ENCODE measurements at regions of chr12 and their contacts with region 1.

Region 1: DNA sequence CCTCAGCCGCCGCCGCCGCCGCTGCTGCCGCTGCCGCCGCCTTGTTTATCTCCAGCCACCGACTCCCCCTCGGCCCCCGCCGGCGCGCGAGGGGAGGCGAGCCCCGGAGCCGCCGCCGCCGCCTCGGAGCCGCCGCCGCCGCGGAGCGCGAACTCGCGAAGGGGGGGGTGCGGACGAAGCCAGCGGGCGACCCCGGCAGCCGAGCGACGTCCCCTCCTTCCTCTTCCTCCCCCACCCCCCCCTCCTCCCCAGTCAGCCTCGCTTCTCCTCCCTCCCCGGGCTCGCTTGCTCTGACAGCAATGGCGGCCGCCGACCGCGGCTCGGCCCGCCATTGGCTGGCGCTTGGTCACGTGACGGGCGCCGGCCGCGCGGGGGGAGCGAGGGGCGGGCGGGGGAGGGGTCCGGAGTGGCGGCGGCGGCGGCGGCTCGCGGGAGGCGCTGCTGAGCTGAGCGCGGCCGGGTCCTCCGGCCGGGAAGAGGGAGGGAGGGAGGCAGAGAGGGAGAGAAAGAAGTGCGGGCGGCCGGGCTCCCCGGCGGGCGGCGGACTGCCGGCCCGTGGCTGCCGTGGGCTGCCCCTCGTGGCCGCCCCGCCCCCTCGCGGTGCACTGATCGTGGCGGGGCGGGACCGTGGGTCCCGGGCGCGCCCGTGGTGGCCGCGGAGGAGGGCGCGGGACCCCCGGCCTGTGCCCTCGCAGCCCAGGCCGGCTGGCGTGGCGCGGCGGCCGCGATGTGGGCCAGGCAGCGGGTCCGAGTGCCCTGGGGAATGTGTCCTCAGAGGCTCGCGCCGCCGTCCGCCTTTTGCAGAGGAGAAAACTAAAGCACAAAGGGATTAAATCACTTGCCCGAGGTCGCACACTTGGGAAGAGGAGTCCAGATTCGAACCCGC is at the start of gene MED13L:
- DNase-seq: peak; percentile 94
- ATAC-seq: peak; percentile 78
- H3K4me3 ChIP-seq: peak within 1 kb of the TSS; percentile 75 to 91 (median 84)
- H3K4me3 Mint-ChIP-seq: peak within 1 kb of the TSS; percentile 98
- H3K27ac ChIP-seq: peak within 1 kb of the TSS; percentile 22 to 71
- H3K27ac Mint-ChIP-seq: peak within 1 kb of the TSS; percentile 93
- H3K4me1 ChIP-seq: peaks cover 25 to 40% of the 10 kb centered on the region in 2 donors
- H3K4me1 Mint-ChIP-seq: peaks cover 39% of the 10 kb centered on the region
- H3K27me3 ChIP-seq: no peaks in the 10 kb centered on the region
- H3K27me3 Mint-ChIP-seq: no peaks in the 10 kb centered on the region
- CTCF ChIP-seq: peak; percentile 26
- total RNA-seq, gene MED13L: 207 TPM in 2 replicates

Region 2: DNA sequence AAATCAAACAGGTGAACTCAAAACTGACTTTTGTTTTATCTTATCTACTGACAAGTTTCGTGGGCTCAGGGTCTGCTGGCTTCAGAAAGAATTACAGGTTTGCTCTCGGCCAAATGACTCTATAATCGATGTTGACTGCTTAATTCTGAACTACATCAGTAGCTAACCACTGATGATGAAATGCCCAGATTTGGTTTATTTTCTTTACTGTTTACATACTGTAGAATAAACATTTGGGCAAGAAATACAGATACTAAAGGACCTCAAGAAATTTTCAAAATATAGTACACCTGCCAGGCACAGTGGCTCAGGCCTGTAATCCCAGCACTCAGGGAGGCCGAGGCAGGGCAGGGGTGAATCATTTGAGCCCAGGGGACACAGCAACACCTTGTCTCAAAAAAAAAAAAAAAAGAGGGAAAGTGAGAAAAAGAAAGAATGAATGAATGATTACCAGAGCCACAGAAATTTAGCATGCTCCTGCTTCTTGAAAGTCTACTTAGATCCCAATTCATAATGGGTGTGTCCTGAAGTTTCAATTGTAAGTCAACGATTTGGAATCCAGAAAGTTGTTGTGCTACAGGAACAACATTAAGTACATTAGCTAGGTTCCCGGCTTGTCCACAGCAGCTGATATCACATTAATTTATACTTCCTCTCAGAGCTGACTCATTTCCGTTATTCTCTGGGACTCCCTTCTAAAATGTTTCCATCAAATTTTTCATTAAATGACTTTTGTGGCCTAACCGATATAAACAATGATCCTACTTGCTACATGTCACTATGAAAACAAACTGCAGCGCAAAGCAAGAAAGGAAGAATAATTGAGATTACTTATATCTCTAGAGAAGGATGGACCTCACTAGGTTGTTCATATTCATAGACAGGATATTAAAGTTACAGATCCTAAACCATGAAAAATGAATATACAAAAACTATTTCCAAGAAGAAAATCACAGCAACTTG is 134.4 kb before region 1 on chr12:
- CTCF ChIA-PET with region 1: interaction called, 3 read pairs
- POLR2A ChIA-PET with region 1: no interaction called
- intact Hi-C with region 1: loop called (anchors 5 kb)
- DNase-seq: no peak
- ATAC-seq: peak; percentile 36
- H3K4me3 ChIP-seq: no peak overlapping the region
- H3K4me3 Mint-ChIP-seq: peak overlapping the region; percentile 38
- H3K27ac ChIP-seq: peak overlapping the region in 1 of 2 donors; percentile 41
- H3K27ac Mint-ChIP-seq: peak overlapping the region; percentile 17
- H3K4me1 ChIP-seq: peaks cover 18 to 32% of the 10 kb centered on the region in 2 donors
- H3K4me1 Mint-ChIP-seq: peaks cover 58% of the 10 kb centered on the region
- H3K27me3 ChIP-seq: no peaks in the 10 kb centered on the region
- H3K27me3 Mint-ChIP-seq: no peaks in the 10 kb centered on the region
- CTCF ChIP-seq: no peak

Region 3: GRCh38 chr12:116263844-116264243 is 13.8 kb before region 1 on chr12:
- CTCF ChIA-PET with region 1: interaction called, 6 read pairs
- POLR2A ChIA-PET with region 1: interaction called, 13 read pairs
- intact Hi-C with region 1: loop called (anchors 1 kb)
- DNase-seq: peak; percentile 23
- ATAC-seq: peak; percentile 45
- H3K4me3 ChIP-seq: no peak overlapping the region
- H3K4me3 Mint-ChIP-seq: peak overlapping the region; percentile 27
- H3K27ac ChIP-seq: no peak overlapping the region
- H3K27ac Mint-ChIP-seq: no peak overlapping the region
- H3K4me1 ChIP-seq: peaks cover 47 to 72% of the 10 kb centered on the region in 2 donors
- H3K4me1 Mint-ChIP-seq: peaks cover 42% of the 10 kb centered on the region
- H3K27me3 ChIP-seq: no peaks in the 10 kb centered on the region
- H3K27me3 Mint-ChIP-seq: no peaks in the 10 kb centered on the region
- CTCF ChIP-seq: no peak

Region 4: DNA sequence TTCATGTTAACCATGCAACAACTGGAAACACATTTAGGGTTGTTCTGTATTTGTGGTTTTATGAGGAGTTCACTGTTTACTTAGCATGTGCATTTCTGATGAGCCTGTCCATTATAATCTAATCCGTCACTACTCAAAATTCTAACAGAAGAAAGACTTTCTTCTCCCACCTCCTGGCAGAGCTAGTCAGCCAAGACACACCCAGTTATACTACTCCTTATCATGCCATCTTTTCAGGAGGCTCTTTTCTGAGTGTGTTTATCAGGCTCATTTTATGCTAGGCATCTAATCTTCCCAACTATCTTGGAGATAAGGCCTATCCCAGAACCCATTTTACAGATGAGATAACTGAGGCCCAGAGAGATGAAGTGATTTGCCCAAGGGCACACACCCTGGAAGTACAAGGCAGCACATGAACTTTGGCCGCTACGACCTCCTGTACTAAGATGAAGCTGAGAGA is 10.2 kb after region 1 on chr12:
- CTCF ChIA-PET with region 1: no interaction called
- POLR2A ChIA-PET with region 1: no interaction called
- intact Hi-C with region 1: no loop called
- DNase-seq: no peak
- ATAC-seq: no peak
- H3K4me3 ChIP-seq: no peak overlapping the region
- H3K4me3 Mint-ChIP-seq: no peak overlapping the region
- H3K27ac ChIP-seq: no peak overlapping the region
- H3K27ac Mint-ChIP-seq: no peak overlapping the region
- H3K4me1 ChIP-seq: peaks cover under 1 to 1% of the 10 kb centered on the region in 2 donors
- H3K4me1 Mint-ChIP-seq: peaks cover 3% of the 10 kb centered on the region
- H3K27me3 ChIP-seq: no peaks in the 10 kb centered on the region
- H3K27me3 Mint-ChIP-seq: no peaks in the 10 kb centered on the region
- CTCF ChIP-seq: no peak

Region 5: DNA sequence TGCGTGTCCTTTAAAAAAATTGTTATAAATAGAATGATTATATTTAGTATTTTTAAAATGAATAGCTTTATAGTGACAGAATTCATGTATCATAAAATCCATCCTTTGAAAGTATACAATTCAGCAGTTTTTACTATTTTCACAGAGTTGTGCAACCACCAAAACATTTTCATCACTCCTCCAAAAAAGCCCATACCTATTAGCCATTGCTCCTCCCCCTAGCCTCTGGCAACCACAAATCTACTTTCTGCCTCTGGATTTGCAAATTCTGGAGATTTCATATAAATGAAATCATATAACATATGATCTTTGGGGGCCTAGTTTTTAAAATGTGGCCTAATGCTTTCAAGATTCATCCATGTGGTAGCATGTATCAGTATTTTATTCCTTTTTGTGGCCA is 117.8 kb after region 1 on chr12:
- CTCF ChIA-PET with region 1: no interaction called
- POLR2A ChIA-PET with region 1: no interaction called
- intact Hi-C with region 1: no loop called
- DNase-seq: no peak
- ATAC-seq: no peak
- H3K4me3 ChIP-seq: no peak overlapping the region
- H3K4me3 Mint-ChIP-seq: no peak overlapping the region
- H3K27ac ChIP-seq: no peak overlapping the region
- H3K27ac Mint-ChIP-seq: no peak overlapping the region
- H3K4me1 ChIP-seq: peaks cover 0 to under 1% of the 10 kb centered on the region in 2 donors
- H3K4me1 Mint-ChIP-seq: peaks cover 2% of the 10 kb centered on the region
- H3K27me3 ChIP-seq: no peaks in the 10 kb centered on the region
- H3K27me3 Mint-ChIP-seq: no peaks in the 10 kb centered on the region
- CTCF ChIP-seq: no peak

Region 6: GRCh38 chr12:116533343-116534251 is 256.0 kb after region 1 on chr12:
- CTCF ChIA-PET with region 1: interaction called, 3 read pairs
- POLR2A ChIA-PET with region 1: no interaction called
- intact Hi-C with region 1: loop called (anchors 2 kb)
- DNase-seq: peak; percentile 85
- ATAC-seq: peak; percentile 93
- H3K4me3 ChIP-seq: peak overlapping the region; percentile 53 to 96 (median 67)
- H3K4me3 Mint-ChIP-seq: peak overlapping the region; percentile 85
- H3K27ac ChIP-seq: no peak overlapping the region
- H3K27ac Mint-ChIP-seq: peak overlapping the region; percentile 90
- H3K4me1 ChIP-seq: peaks cover 37 to 43% of the 10 kb centered on the region in 2 donors
- H3K4me1 Mint-ChIP-seq: peaks cover 52% of the 10 kb centered on the region
- H3K27me3 ChIP-seq: no peaks in the 10 kb centered on the region
- H3K27me3 Mint-ChIP-seq: no peaks in the 10 kb centered on the region
- CTCF ChIP-seq: no peak

Region 7: GRCh38 chr12:116703214-116703795 is 425.7 kb after region 1 on chr12:
- CTCF ChIA-PET with region 1: no interaction called
- POLR2A ChIA-PET with region 1: no interaction called
- intact Hi-C with region 1: loop called (anchors 10 kb)
- DNase-seq: peak; percentile 74
- ATAC-seq: peak; percentile 81
- H3K4me3 ChIP-seq: no peak overlapping the region
- H3K4me3 Mint-ChIP-seq: no peak overlapping the region
- H3K27ac ChIP-seq: no peak overlapping the region
- H3K27ac Mint-ChIP-seq: no peak overlapping the region
- H3K4me1 ChIP-seq: peaks cover 9 to 11% of the 10 kb centered on the region in 2 donors
- H3K4me1 Mint-ChIP-seq: peaks cover 12% of the 10 kb centered on the region
- H3K27me3 ChIP-seq: peaks cover 0 to 3% (median 0%) of the 10 kb centered on the region in 4 experiments
- H3K27me3 Mint-ChIP-seq: peaks cover 8% of the 10 kb centered on the region
- CTCF ChIP-seq: peak; percentile 98

Measured in B cell (primary cell).